SK-N-SH (cell line): ENCODE measurements at regions of chr1 and their contacts with region 1.

Region 1: GRCh38 chr1:40153073-40153770 is 8.0 kb upstream of the RLF start:
- DNase-seq: peak; percentile 27
- H3K4me3 ChIP-seq: no peak overlapping the region
- H3K27ac ChIP-seq: no peak overlapping the region
- H3K4me1 ChIP-seq: no peaks in the 10 kb centered on the region
- H3K27me3 ChIP-seq: no peaks in the 10 kb centered on the region
- CTCF ChIP-seq: peak; percentile 79
- EP300 ChIP-seq: no peak
- RAD21 ChIP-seq: peak; percentile 76

Region 2: GRCh38 chr1:40132383-40133311 is 20.6 kb before region 1 on chr1:
- CTCF ChIA-PET with region 1: interaction called, 17 read pairs
- POLR2A ChIA-PET with region 1: no interaction called
- DNase-seq: peak; percentile 38
- H3K4me3 ChIP-seq: no peak overlapping the region; a peak in 1 of 4 replicates
- H3K27ac ChIP-seq: no peak overlapping the region
- H3K4me1 ChIP-seq: no peaks in the 10 kb centered on the region
- H3K27me3 ChIP-seq: peaks cover 6% of the 10 kb centered on the region; the same call in 1 of the 2 replicates
- CTCF ChIP-seq: no peak
- EP300 ChIP-seq: no peak
- RAD21 ChIP-seq: no peak

Region 3: GRCh38 chr1:40197656-40198055 is 44.4 kb after region 1 on chr1:
- CTCF ChIA-PET with region 1: interaction called, 13 read pairs
- POLR2A ChIA-PET with region 1: no interaction called
- DNase-seq: peak; percentile 44
- H3K4me3 ChIP-seq: no peak overlapping the region
- H3K27ac ChIP-seq: no peak overlapping the region
- H3K4me1 ChIP-seq: no peaks in the 10 kb centered on the region
- H3K27me3 ChIP-seq: no peaks in the 10 kb centered on the region
- CTCF ChIP-seq: peak; percentile 47
- EP300 ChIP-seq: no peak
- RAD21 ChIP-seq: 0 out of 2 replicates have a peak, but pooled peaks have one; percentile 5

Region 4: DNA sequence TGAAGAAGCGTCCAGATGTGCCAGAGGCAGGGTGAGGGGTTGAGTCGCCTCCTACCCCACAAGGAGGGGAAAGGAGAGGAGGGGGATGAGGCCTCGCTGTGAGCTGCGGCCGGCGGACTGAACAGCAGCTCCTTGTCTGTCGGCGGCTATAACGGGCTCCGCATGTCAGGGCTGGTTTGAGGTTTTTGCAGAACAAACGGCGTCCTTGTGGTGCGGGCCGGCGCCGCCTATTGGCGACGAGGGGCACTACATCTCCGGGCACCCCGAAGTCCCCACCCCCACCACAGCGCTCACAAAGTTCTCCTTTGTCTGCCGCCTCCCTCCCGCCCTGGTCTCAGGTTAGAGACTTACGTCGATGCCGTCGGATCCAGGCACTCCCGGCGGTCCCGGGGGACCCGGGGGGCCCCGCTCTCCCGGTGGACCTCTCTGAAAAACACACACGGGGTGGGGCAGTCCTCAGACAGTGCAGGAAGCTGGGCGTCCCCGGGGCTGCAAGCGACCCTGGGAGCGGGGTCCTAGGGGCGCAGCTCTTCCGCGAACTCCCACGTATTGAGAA is 162.1 kb after region 1 on chr1:
- CTCF ChIA-PET with region 1: interaction called, 83 read pairs
- POLR2A ChIA-PET with region 1: no interaction called
- DNase-seq: peak; percentile 92
- H3K4me3 ChIP-seq: peak overlapping the region; percentile 29 to 47; a peak in 3 of 4 replicates
- H3K27ac ChIP-seq: no peak overlapping the region
- H3K4me1 ChIP-seq: peaks cover 0 to 6% of the 10 kb centered on the region in 2 experiments; a peak in 1 of 4 replicates
- H3K27me3 ChIP-seq: no peaks in the 10 kb centered on the region; the same call in 1 of the 2 replicates
- CTCF ChIP-seq: peak; percentile 75
- EP300 ChIP-seq: no peak
- RAD21 ChIP-seq: peak; percentile 58

Region 5: DNA sequence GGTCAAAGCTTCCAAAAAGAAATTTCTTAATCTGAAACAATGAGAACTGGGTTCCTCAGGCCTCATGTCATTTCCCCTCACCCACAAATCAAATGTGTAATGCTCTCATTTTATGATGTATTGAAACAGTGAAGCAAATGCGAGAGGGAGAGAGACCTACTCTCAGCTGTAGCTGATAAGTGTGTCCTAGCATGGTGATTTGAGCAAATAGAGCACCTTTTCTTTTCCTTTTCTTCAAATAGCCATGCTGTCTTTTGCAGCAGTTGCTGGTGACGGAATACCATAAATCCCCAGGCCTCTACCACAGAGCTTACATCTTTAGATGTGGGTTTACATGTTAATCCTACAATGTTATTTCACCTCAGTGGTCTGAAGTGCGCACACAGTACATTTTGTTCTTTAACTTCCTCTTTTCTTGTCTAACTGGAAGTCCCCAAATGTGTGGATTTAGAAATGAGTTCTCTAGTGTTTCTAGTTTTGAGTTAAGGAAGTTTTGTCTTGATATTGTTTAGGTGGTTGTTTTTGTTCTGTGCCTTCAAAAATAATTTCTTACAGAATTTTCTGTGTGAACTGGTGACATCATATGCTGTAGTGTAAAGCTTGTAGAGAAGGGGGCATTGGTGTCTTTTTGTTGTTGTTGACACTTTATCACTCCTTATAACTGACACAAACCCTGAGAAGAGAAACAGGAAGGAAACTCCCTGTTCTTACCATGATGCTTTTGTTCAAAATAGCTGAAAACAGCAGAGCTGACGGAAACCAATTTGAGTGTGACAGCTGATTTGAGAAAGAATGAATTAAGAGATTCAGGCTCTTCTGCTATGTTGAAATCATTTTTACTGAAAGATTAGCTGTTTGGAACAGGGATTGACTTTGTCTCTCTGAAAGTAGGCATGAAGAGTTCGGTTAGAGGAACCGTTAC is 232.5 kb after region 1 on chr1:
- CTCF ChIA-PET with region 1: interaction called, 18 read pairs
- POLR2A ChIA-PET with region 1: no interaction called
- DNase-seq: no peak
- H3K4me3 ChIP-seq: no peak overlapping the region
- H3K27ac ChIP-seq: no peak overlapping the region
- H3K4me1 ChIP-seq: peaks cover 24 to 43% of the 10 kb centered on the region in 2 experiments; a peak in 3 of 4 replicates
- H3K27me3 ChIP-seq: no peaks in the 10 kb centered on the region
- CTCF ChIP-seq: no peak
- EP300 ChIP-seq: no peak
- RAD21 ChIP-seq: no peak

Region 6: GRCh38 chr1:40438391-40439015 is 285.3 kb after region 1 on chr1:
- CTCF ChIA-PET with region 1: interaction called, 12 read pairs
- POLR2A ChIA-PET with region 1: no interaction called
- DNase-seq: peak; percentile 75
- H3K4me3 ChIP-seq: no peak overlapping the region
- H3K27ac ChIP-seq: no peak overlapping the region
- H3K4me1 ChIP-seq: no peaks in the 10 kb centered on the region
- H3K27me3 ChIP-seq: no peaks in the 10 kb centered on the region
- CTCF ChIP-seq: peak; percentile 67
- EP300 ChIP-seq: no peak
- RAD21 ChIP-seq: peak; percentile 52